ENCODE measurements at regions of chr4 and their contacts with region 1.

Region 1: GRCh38 chr4:141540643-141541042 is 95.7 kb upstream of the IL15 start:
- DNase-seq: no peak
- ATAC-seq: no peak
- H3K4me3 ChIP-seq: no peak overlapping the region
- H3K27ac ChIP-seq: no peak overlapping the region
- H3K4me1 ChIP-seq: no peaks in the 10 kb centered on the region
- H3K27me3 ChIP-seq: no peaks in the 10 kb centered on the region

Region 2: GRCh38 chr4:141711014-141711610 is 170.5 kb after region 1 on chr4:
- intact Hi-C with region 1: loop called in 1 of 2 experiments (anchors 10 kb)
- DNase-seq: no peak
- ATAC-seq: no peak
- H3K4me3 ChIP-seq: no peak overlapping the region
- H3K27ac ChIP-seq: no peak overlapping the region
- H3K4me1 ChIP-seq: peaks cover 0 to 5% of the 10 kb centered on the region in 2 donors
- H3K27me3 ChIP-seq: no peaks in the 10 kb centered on the region